CD8-positive, alpha-beta T cell (primary cell): ENCODE measurements at regions of chr3 and their contacts with region 1.

Region 1: DNA sequence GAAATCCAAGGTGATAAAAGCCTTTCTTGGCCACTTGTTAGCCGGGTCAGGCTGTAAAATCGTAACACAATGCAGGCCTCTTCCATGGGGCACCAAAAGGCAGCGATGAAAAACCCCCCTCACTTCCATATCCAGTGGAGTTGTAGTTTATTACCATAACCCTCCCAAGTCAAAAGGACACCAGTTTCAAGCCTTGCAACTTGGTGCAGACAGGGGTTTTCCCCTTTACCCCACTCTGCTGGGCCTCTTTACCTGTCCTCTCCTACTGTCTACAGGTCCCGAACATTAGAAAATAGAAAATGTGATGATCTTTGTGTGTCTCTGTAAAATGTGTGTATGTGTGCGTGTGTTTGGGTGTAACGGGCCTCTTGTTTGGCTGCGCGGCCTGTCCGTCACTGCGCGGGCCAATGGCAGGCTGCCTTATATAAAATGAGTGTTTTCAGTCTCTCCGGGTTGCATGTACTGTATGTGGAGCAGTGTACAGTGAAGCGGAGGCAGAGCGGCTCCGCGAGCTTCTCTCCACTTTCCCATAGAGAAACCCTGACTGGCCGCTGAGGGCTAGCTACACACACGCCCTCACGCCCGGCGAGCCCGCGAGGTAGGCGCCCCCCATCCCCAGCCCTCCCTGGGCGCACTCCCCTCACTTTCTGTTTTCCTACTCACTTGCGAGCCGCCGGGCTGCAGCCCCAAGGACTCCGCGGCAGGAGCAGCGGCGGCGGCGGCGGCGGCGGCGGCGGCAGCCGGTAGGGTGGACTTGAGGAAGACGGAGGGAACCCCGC is at the start of gene BBX:
- DNase-seq: peak; percentile 83 to 98 (median 91)
- ATAC-seq: peak; percentile 91
- H3K4me3 ChIP-seq: peak within 1 kb of the TSS; percentile 77 to 86
- H3K4me3 Mint-ChIP-seq: peak within 1 kb of the TSS; percentile 99
- H3K27ac ChIP-seq: peak within 1 kb of the TSS; percentile 47 to 69
- H3K27ac Mint-ChIP-seq: peak within 1 kb of the TSS; percentile 99
- H3K4me1 ChIP-seq: peaks cover 19% of the 10 kb centered on the region
- H3K4me1 Mint-ChIP-seq: peaks cover 32% of the 10 kb centered on the region
- H3K27me3 ChIP-seq: no peaks in the 10 kb centered on the region
- H3K27me3 Mint-ChIP-seq: no peaks in the 10 kb centered on the region
- CTCF ChIP-seq: no peak
- total RNA-seq, gene BBX: 71.3 to 77.9 TPM

Region 2: DNA sequence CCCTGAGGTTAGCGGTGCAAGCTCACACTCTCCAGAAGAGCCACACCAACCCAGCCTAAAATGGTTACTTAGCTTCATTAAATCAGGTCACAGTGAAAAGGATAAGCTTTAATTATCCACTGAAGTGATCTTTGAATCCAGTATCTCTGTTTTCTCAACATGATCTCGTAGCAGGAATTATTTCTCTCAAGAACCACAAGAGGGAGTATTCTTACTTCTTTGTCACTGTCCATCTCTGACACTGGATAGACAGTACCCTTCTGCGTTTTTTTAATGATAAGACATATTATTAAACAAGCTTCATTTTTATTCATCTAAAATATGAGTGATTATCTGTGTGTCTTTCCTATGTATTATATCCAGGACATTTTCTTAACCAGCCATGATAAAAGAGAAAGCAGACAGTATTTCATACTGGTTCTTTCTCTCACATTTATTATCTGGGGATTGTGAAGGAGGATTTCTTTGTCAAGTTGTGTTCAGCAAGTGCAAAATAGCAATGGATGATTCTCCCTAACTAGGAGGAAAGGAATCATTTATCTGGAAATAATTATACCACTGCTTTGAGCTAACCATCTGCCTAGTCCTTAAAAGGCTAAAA is 250.8 kb before region 1 on chr3:
- CTCF ChIA-PET with region 1: interaction called, 3 read pairs
- POLR2A ChIA-PET with region 1: no interaction called
- intact Hi-C with region 1: loop called in 1 of 2 experiments (anchors 10 kb)
- DNase-seq: peak in 2 of 9 experiments; percentile 12 to 35
- ATAC-seq: peak; percentile 38
- H3K4me3 ChIP-seq: no peak overlapping the region
- H3K4me3 Mint-ChIP-seq: no peak overlapping the region
- H3K27ac ChIP-seq: no peak overlapping the region
- H3K27ac Mint-ChIP-seq: no peak overlapping the region
- H3K4me1 ChIP-seq: no peaks in the 10 kb centered on the region
- H3K4me1 Mint-ChIP-seq: no peaks in the 10 kb centered on the region
- H3K27me3 ChIP-seq: peaks cover 0 to 5% of the 10 kb centered on the region in 2 experiments
- H3K27me3 Mint-ChIP-seq: peaks cover 7% of the 10 kb centered on the region
- CTCF ChIP-seq: peak; percentile 69

Region 3: GRCh38 chr3:107395066-107395465 is 127.6 kb before region 1 on chr3:
- CTCF ChIA-PET with region 1: no interaction called
- POLR2A ChIA-PET with region 1: no interaction called
- intact Hi-C with region 1: no loop called
- DNase-seq: no peak
- ATAC-seq: no peak
- H3K4me3 ChIP-seq: no peak overlapping the region
- H3K4me3 Mint-ChIP-seq: no peak overlapping the region
- H3K27ac ChIP-seq: no peak overlapping the region
- H3K27ac Mint-ChIP-seq: no peak overlapping the region
- H3K4me1 ChIP-seq: no peaks in the 10 kb centered on the region
- H3K4me1 Mint-ChIP-seq: no peaks in the 10 kb centered on the region
- H3K27me3 ChIP-seq: no peaks in the 10 kb centered on the region
- H3K27me3 Mint-ChIP-seq: peaks cover 4% of the 10 kb centered on the region
- CTCF ChIP-seq: no peak

Region 4: DNA sequence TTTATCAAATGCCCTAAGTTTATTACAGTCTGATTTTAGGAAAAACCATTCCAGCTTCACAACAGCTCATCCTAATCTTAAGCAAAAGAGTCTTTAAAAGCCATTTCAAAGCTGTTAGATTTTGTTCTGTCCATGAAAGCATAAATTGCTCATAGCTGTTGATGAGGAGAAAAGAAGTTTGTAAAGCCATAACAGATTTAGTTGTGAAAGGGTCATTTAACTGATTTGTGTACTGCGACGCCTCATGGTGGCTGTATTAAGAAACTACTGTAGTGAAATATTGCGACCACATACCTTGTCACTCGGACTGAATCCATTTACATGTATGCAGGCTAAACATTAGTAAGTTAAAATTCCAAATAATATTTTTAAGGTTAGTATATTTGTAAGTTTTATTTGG is 21.0 kb after region 1 on chr3:
- CTCF ChIA-PET with region 1: interaction called, 3 read pairs
- POLR2A ChIA-PET with region 1: no interaction called
- intact Hi-C with region 1: loop called in 1 of 2 experiments (anchors 2 kb)
- DNase-seq: peak in 2 of 9 experiments; percentile 30 to 49
- ATAC-seq: no peak
- H3K4me3 ChIP-seq: no peak overlapping the region
- H3K4me3 Mint-ChIP-seq: no peak overlapping the region
- H3K27ac ChIP-seq: no peak overlapping the region
- H3K27ac Mint-ChIP-seq: no peak overlapping the region
- H3K4me1 ChIP-seq: peaks cover 7% of the 10 kb centered on the region
- H3K4me1 Mint-ChIP-seq: peaks cover 40% of the 10 kb centered on the region
- H3K27me3 ChIP-seq: no peaks in the 10 kb centered on the region
- H3K27me3 Mint-ChIP-seq: no peaks in the 10 kb centered on the region
- CTCF ChIP-seq: no peak

Region 5: DNA sequence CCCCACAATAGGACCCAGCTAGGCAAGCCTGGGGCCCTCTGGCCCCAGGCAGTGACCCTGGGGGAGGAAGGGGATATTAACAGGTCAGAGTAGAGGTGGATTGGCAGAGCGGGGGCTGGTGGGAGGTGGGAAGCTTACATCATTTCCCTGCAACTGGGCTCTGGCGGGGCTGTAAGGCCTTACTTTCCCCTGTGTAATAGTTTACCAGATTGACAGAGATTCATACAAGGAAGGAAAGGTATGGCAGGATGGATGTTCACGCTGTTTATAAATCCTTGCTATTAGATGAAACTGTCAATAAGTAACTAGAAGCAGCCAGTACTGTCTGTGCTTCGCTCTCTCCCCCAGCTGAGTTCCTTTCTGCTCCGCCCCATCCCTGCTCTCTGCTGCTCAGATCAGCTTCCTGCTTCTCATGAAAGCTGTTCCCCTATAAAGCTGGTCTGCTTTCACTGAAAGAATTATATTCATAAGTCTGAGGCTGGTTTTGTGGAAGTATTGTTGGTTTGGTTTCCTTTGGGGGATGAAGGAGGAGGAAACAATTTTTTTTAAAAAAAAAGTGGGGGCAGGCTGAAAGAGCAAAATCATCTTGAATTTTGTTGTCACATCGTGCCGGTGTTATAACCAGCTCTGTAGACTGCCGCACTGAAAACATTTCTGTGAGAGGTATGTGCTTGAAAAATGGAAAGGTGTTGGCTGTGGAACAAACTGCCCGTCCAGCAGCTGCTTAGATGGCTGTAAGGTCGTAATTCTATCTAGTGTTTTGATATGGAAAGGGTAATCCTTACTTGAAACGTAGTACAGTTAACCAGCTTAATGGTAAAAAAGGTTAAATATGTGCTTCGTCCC is 76.5 kb after region 1 on chr3:
- CTCF ChIA-PET with region 1: no interaction called
- POLR2A ChIA-PET with region 1: interaction called, 3 read pairs
- intact Hi-C with region 1: loop called in 1 of 2 experiments (anchors 5 kb)
- DNase-seq: peak; percentile 2 to 69 (median 44)
- ATAC-seq: peak; percentile 89
- H3K4me3 ChIP-seq: peak overlapping the region; percentile 40
- H3K4me3 Mint-ChIP-seq: peak overlapping the region; percentile 87
- H3K27ac ChIP-seq: peak overlapping the region; percentile 32 to 81
- H3K27ac Mint-ChIP-seq: peak overlapping the region; percentile 94
- H3K4me1 ChIP-seq: peaks cover 31% of the 10 kb centered on the region
- H3K4me1 Mint-ChIP-seq: peaks cover 69% of the 10 kb centered on the region
- H3K27me3 ChIP-seq: no peaks in the 10 kb centered on the region
- H3K27me3 Mint-ChIP-seq: no peaks in the 10 kb centered on the region
- CTCF ChIP-seq: no peak

Region 6: GRCh38 chr3:108090701-108091451 is 568.2 kb after region 1 on chr3 and contains the start of gene CD47:
- CTCF ChIA-PET with region 1: no interaction called
- POLR2A ChIA-PET with region 1: no interaction called
- intact Hi-C with region 1: loop called in 1 of 2 experiments (anchors 10 kb)
- DNase-seq: peak; percentile 93 to 99 (median 97)
- ATAC-seq: peak; percentile 70
- H3K4me3 ChIP-seq: peak within 1 kb of the TSS; percentile 91 to 93
- H3K4me3 Mint-ChIP-seq: peak within 1 kb of the TSS; percentile 98
- H3K27ac ChIP-seq: peak within 1 kb of the TSS; percentile 93 to 94
- H3K27ac Mint-ChIP-seq: peak within 1 kb of the TSS; percentile 99
- H3K4me1 ChIP-seq: peaks cover 51% of the 10 kb centered on the region
- H3K4me1 Mint-ChIP-seq: peaks cover 39% of the 10 kb centered on the region
- H3K27me3 ChIP-seq: no peaks in the 10 kb centered on the region
- H3K27me3 Mint-ChIP-seq: no peaks in the 10 kb centered on the region
- CTCF ChIP-seq: no peak
- total RNA-seq, gene CD47: 118 to 125 TPM